Ascending aorta (tissue), 2 donors: ENCODE measurements at regions of chrX and their contacts with region 1.

Region 1: DNA sequence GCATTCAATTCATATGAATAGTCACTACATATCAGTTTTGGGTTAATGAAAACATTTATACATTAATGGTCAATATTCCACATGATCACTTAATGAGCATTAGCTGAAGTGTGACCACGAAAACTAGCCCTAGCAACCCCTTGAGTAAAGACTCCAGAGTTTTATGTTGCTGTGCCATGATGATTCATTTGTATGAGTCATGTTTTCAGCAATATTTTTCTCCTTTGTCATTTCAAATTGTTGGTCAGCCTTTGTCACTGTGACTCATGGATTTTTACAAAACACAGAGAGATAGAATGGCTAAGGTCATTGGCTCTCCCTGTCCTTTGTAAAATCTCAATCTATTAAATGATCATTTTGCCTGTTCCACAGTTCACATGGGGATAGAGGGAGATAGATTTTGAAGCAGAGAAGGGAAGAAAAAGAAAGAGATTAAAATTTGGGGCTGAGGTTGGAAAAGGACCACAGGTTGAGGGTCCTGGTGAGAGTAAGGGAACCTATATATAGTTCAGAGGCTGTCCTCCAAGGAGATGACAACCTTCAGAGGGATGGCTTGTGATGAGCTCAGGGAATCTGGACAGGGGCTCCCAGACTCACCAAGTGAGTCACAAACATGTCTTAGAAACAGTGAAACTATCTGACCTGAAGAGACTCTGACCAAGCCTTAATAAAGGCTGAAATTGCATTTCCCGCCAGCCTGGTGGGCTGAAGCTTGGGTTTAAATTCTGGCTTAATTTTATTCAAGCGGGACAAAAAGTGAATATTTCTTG is 25.6 kb downstream of the NR0B1 start:
- DNase-seq: no peak
- H3K4me3 ChIP-seq: no peak overlapping the region
- H3K27ac ChIP-seq: no peak overlapping the region
- H3K4me1 ChIP-seq: no peaks in the 10 kb centered on the region
- H3K27me3 ChIP-seq: no peaks in the 10 kb centered on the region
- CTCF ChIP-seq: no peak

Region 2: GRCh38 chrX:29662759-29663503 is 620.7 kb before region 1 on chrX:
- intact Hi-C with region 1: loop called (anchors 10 kb)
- DNase-seq: no peak
- H3K4me3 ChIP-seq: no peak overlapping the region
- H3K27ac ChIP-seq: peak overlapping the region in 1 of 2 donors; percentile 1
- H3K4me1 ChIP-seq: peaks cover 0 to 4% of the 10 kb centered on the region in 2 donors
- H3K27me3 ChIP-seq: no peaks in the 10 kb centered on the region
- CTCF ChIP-seq: no peak